ENCODE measurements at regions of chr11 and their contacts with region 1.

Region 1: GRCh38 chr11:131217313-131218310 is 152.8 kb upstream of the NTM start:
- DNase-seq: peak; percentile 64
- ATAC-seq: peak; percentile 78
- H3K4me3 ChIP-seq: no peak overlapping the region
- H3K27ac ChIP-seq: no peak overlapping the region
- H3K4me1 ChIP-seq: no peaks in the 10 kb centered on the region
- H3K27me3 ChIP-seq: peaks cover 95% of the 10 kb centered on the region
- CTCF ChIP-seq: peak; percentile 73

Region 2: DNA sequence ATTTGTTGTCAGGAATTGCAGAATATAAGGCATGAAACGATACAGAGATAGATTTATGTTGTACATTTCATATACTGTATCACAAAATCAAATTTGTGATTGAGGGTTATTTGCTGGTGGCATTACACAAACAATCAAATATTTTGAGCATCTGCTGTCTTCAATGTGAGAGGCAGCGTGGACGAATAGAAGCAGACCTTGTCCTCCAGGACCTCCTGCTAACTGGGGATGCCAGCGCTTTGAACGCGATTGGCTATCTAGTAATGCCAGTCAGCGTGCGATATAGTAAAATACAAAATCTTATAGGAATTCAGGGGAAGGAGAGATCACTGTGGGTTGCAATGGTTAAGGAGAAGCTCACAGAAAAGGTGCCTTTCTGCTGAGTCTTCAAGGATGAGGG is 300.7 kb before region 1 on chr11:
- CTCF ChIA-PET with region 1: no interaction called
- POLR2A ChIA-PET with region 1: no interaction called
- intact Hi-C with region 1: loop called (anchors 2 kb)
- DNase-seq: no peak
- ATAC-seq: no peak
- H3K4me3 ChIP-seq: peak overlapping the region; percentile 79
- H3K27ac ChIP-seq: no peak overlapping the region
- H3K4me1 ChIP-seq: peaks cover 15% of the 10 kb centered on the region
- H3K27me3 ChIP-seq: peaks cover 22% of the 10 kb centered on the region; the same call in 1 of the 2 replicates
- CTCF ChIP-seq: no peak

Region 3: DNA sequence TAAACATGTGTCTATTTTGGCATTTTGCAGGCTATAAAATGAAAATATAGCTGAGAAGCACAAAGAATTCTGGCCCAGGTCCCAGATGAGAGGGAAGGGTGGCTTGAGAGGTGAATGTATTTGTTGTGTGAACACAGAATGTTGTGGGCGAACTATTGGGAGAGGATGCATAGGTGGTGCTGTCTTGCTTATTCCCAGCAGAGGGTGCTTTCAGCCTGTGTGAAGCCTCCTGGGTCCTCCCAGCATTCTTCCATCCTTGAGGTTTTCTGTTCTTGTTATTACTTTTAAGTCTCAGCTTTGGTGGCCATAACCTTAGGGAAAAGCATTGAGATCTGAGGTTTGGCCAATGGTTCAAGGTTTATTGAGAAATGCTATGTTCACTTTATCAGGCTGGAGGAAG is 192.6 kb before region 1 on chr11:
- CTCF ChIA-PET with region 1: no interaction called
- POLR2A ChIA-PET with region 1: no interaction called
- intact Hi-C with region 1: loop called (anchors 1 kb)
- DNase-seq: peak; percentile 74
- ATAC-seq: peak; percentile 99
- H3K4me3 ChIP-seq: no peak overlapping the region
- H3K27ac ChIP-seq: no peak overlapping the region
- H3K4me1 ChIP-seq: no peaks in the 10 kb centered on the region
- H3K27me3 ChIP-seq: peaks cover 52% of the 10 kb centered on the region
- CTCF ChIP-seq: peak; percentile 95

Region 4: GRCh38 chr11:131064373-131064991 is 153.1 kb before region 1 on chr11:
- CTCF ChIA-PET with region 1: interaction called, 3 read pairs
- POLR2A ChIA-PET with region 1: no interaction called
- intact Hi-C with region 1: loop called (anchors 1 kb)
- DNase-seq: peak; percentile 82
- ATAC-seq: peak; percentile 93
- H3K4me3 ChIP-seq: no peak overlapping the region
- H3K27ac ChIP-seq: no peak overlapping the region
- H3K4me1 ChIP-seq: no peaks in the 10 kb centered on the region
- H3K27me3 ChIP-seq: peaks cover 94% of the 10 kb centered on the region
- CTCF ChIP-seq: peak; percentile 99

Region 5: DNA sequence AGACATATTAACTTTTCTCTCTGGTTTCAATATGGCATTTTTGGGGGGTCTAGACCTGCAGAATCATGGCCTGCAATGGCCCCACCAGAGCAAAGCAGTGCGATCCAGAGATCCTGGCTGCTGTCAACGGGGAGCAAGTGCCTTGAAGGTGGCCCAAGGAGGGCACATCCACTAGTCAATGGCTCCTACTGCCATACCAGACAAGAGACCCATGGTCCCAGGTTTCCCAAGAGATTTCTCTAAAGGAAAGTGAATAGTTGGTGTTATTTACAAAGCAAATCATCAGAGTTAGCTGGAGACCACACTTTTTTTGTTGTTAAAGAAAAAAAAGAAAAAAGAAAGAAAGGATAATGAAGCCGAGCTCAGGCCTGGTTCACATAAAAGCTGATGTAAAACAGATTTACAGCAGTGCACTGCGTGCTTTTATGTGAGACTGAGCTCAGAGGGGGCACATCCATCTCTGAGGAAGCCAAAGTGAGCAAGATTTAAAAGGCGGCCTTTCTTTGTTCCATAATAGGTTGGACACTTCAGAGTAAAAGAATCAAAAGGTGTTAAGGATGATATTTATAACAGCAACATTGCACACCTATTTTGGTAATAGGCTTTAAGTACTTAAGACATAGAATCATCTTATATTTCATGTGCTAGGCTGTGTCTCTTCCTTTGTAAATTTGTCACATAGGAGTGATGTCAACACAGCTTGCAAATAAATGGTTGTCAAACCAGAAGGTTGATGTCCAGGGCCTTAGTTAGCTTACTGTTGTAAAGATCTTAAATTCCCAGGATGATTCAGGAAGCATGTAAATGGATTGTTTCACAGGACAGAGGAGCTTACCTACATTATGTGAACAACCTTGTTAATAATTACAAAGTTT is 48.5 kb before region 1 on chr11:
- CTCF ChIA-PET with region 1: no interaction called
- POLR2A ChIA-PET with region 1: no interaction called
- intact Hi-C with region 1: no loop called
- DNase-seq: no peak
- ATAC-seq: no peak
- H3K4me3 ChIP-seq: no peak overlapping the region
- H3K27ac ChIP-seq: no peak overlapping the region
- H3K4me1 ChIP-seq: no peaks in the 10 kb centered on the region
- H3K27me3 ChIP-seq: peaks cover 83% of the 10 kb centered on the region
- CTCF ChIP-seq: no peak

Region 6: DNA sequence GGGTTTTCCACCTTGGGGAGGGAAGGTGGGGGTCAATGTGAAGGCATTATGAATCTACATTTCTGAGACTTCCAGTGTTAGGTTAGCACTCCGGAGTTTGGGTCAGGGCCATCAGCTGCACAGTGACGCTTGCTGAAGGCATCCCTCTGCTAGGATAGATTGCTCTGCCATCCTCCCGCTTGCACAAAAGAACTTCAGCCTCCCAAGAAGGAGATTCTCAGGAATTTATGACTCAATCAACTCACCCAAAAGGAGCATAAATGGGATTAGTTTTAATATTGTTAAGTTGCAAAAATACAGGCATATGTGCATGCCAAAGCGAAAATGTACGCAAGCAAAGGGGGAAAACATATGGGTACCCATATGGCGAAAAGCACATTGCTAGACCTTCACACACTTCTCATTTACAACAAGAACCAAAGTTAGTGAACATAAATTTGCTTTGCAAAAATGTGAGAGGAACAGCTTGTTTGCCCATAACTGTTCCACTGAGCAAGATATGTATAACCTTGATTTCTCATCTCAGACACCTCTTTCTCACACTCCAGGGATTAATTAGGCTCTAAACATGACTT is 1301.7 kb after region 1 on chr11:
- CTCF ChIA-PET with region 1: no interaction called
- POLR2A ChIA-PET with region 1: no interaction called
- intact Hi-C with region 1: no loop called
- DNase-seq: no peak
- ATAC-seq: no peak
- H3K4me3 ChIP-seq: no peak overlapping the region
- H3K27ac ChIP-seq: no peak overlapping the region
- H3K4me1 ChIP-seq: no peaks in the 10 kb centered on the region
- H3K27me3 ChIP-seq: no peaks in the 10 kb centered on the region
- CTCF ChIP-seq: no peak

Measured in PC-3 (cell line).